ENCODE measurements at regions of chr12 and their contacts with region 1.

Region 1: DNA sequence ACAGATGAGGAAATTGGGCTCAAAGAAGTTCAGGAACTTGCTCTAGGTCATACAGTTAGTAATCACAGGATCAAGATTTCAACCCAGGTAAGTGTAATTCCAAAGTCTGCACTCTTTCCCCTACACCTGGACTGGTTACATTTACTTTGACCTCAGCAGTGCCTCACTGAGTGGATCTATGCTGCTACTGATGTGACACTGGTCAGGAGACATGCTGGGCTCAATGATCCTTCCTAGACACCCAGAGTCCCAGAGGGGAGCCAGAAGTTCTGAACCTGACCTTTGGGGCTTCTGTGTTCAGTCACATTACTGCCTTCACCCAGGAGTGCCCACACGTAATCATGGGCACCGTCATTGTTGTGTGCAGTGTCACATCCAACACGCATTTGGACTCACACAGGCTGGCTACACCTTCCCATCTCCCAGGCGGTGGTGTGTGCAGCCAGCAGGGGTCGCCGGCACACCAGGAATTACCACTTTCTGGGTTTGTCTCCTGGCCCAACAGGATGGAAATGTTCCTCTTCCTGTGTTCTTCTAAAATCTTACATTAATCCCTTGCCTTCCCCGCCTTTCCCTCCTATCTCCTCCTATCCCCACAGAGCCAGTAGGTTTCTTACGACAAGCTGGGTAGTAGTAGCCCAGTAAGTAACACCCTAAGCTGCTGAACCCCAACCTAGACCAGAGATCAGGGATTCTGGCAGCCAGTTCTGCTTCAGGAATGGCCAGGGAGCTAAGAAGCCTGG is 25.6 kb downstream of the CALCOCO1 start:
- DNase-seq: peak; percentile 82
- H3K4me3 Mint-ChIP-seq: no peak overlapping the region
- H3K27ac Mint-ChIP-seq: no peak overlapping the region
- H3K4me1 Mint-ChIP-seq: peaks cover 5% of the 10 kb centered on the region
- H3K27me3 Mint-ChIP-seq: peaks cover 80% of the 10 kb centered on the region
- CTCF ChIP-seq: peak; percentile 95

Region 2: GRCh38 chr12:53205747-53206419 is 495.8 kb before region 1 on chr12:
- CTCF ChIA-PET with region 1: no interaction called
- POLR2A ChIA-PET with region 1: no interaction called
- intact Hi-C with region 1: no loop called
- DNase-seq: peak; percentile 62
- H3K4me3 Mint-ChIP-seq: no peak overlapping the region
- H3K27ac Mint-ChIP-seq: no peak overlapping the region
- H3K4me1 Mint-ChIP-seq: peaks cover 9% of the 10 kb centered on the region
- H3K27me3 Mint-ChIP-seq: no peaks in the 10 kb centered on the region
- CTCF ChIP-seq: no peak

Region 3: DNA sequence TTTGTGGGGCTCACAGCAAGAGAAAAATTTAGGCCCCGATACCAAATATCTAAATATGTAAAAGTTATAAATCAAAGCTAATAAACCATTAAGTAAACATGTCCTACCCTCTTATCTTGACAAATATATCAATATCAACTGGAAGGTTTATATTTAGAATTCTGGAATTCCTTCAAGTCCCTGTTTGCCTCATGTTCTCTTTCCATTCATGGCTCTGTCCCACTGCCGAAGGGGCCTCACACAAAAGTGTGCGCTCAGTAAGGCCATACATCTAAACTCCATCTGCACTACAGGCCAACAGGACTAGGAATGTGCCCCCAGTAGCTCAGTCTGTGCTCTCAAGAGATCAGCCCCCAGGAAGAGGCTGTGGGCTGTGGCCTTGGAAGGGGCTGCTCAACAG is 15.3 kb before region 1 on chr12:
- CTCF ChIA-PET with region 1: interaction called, 19 read pairs
- POLR2A ChIA-PET with region 1: interaction called, 5 read pairs
- intact Hi-C with region 1: no loop called
- DNase-seq: no peak
- H3K4me3 Mint-ChIP-seq: no peak overlapping the region
- H3K27ac Mint-ChIP-seq: no peak overlapping the region
- H3K4me1 Mint-ChIP-seq: no peaks in the 10 kb centered on the region
- H3K27me3 Mint-ChIP-seq: no peaks in the 10 kb centered on the region
- CTCF ChIP-seq: no peak

Region 4: GRCh38 chr12:53719649-53720048 is 18.0 kb after region 1 on chr12:
- CTCF ChIA-PET with region 1: interaction called, 12 read pairs
- POLR2A ChIA-PET with region 1: interaction called, 29 read pairs
- intact Hi-C with region 1: no loop called
- DNase-seq: no peak
- H3K4me3 Mint-ChIP-seq: no peak overlapping the region
- H3K27ac Mint-ChIP-seq: no peak overlapping the region
- H3K4me1 Mint-ChIP-seq: no peaks in the 10 kb centered on the region
- H3K27me3 Mint-ChIP-seq: no peaks in the 10 kb centered on the region
- CTCF ChIP-seq: no peak

Region 5: DNA sequence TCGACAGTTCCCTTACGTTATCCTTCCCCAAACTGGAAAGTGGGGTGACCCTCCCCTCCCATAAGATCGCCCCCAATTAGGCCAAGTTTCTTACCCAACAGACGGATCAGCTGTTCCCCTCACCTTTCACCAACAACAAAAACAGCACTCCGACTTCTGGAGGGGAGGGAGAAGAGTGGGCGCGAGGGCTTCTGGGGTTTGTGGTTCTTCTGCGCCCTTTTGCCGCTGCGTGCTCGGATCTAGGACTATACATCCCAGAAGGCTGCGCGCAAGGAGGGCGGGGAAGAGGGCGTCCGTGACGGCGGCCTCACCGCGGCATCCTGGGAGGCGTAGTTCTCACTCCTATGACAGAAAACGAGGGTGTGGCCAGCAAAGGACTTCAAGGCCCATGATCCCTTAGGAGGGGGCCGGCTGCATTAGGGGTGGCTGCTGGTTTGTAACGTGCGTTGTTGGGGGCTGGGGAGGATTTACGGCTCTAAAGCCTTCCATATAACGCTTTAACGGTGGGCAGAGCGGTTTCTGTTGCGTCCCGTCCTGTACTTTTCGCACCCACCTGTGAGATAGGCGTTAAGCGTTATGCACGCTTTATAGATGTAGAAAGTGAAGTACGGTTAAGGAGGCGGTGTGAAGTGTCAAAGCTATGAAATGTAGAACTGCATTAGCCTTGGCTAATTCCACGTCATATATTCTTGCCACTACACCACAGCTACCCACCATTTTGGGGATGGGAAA is 25.8 kb after region 1 on chr12 and contains the start of gene CALCOCO1:
- CTCF ChIA-PET with region 1: interaction called, 74 read pairs
- POLR2A ChIA-PET with region 1: interaction called, 29 read pairs
- intact Hi-C with region 1: no loop called
- DNase-seq: peak; percentile 98
- H3K4me3 Mint-ChIP-seq: peak within 1 kb of the TSS; percentile 95
- H3K27ac Mint-ChIP-seq: peak within 1 kb of the TSS; percentile 99
- H3K4me1 Mint-ChIP-seq: peaks cover 15% of the 10 kb centered on the region
- H3K27me3 Mint-ChIP-seq: no peaks in the 10 kb centered on the region
- CTCF ChIP-seq: no peak
- total RNA-seq, gene CALCOCO1: 49.4 and 74.6 TPM in 2 replicates

Region 6: GRCh38 chr12:53738406-53739213 is 36.9 kb after region 1 on chr12:
- CTCF ChIA-PET with region 1: interaction called, 339 read pairs
- POLR2A ChIA-PET with region 1: interaction called, 6 read pairs
- intact Hi-C with region 1: loop called (anchors 1 kb)
- DNase-seq: no peak
- H3K4me3 Mint-ChIP-seq: no peak overlapping the region
- H3K27ac Mint-ChIP-seq: no peak overlapping the region
- H3K4me1 Mint-ChIP-seq: peaks cover 10% of the 10 kb centered on the region
- H3K27me3 Mint-ChIP-seq: peaks cover 14% of the 10 kb centered on the region
- CTCF ChIP-seq: no peak

Region 7: GRCh38 chr12:53757095-53757770 is 55.5 kb after region 1 on chr12:
- CTCF ChIA-PET with region 1: interaction called, 10 read pairs
- POLR2A ChIA-PET with region 1: no interaction called
- intact Hi-C with region 1: no loop called
- DNase-seq: peak; percentile 71
- H3K4me3 Mint-ChIP-seq: no peak overlapping the region
- H3K27ac Mint-ChIP-seq: no peak overlapping the region
- H3K4me1 Mint-ChIP-seq: peaks cover 7% of the 10 kb centered on the region
- H3K27me3 Mint-ChIP-seq: peaks cover 26% of the 10 kb centered on the region
- CTCF ChIP-seq: peak; percentile 83

Region 8: DNA sequence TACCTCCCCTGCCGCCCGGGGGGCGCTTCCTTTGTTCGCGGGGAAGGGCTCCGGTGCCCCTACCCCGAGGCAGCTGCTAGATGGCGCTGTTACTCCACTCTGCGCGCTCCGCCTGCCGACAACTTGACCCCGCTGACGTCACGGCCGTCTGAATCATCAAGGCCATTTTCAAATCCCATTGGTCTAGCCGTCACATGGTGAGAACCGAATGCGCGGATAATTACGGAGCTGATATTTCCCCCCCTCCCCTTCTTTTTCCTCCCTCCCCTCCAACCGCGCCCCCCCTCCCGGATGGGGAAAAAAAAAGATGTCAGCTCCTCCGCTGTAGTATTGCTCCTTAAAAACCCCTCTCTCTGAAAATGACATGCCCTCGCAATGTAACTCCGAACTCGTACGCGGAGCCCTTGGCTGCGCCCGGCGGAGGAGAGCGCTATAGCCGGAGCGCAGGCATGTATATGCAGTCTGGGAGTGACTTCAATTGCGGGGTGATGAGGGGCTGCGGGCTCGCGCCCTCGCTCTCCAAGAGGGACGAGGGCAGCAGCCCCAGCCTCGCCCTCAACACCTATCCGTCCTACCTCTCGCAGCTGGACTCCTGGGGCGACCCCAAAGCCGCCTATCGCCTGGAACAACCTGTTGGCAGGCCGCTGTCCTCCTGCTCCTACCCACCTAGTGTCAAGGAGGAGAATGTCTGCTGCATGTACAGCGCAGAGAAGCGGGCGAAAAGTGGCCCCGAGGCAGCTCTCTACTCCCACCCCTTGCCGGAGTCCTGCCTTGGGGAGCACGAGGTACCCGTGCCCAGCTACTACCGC is 283.4 kb after region 1 on chr12 and contains the start of gene HOXC10:
- CTCF ChIA-PET with region 1: interaction called, 8 read pairs
- POLR2A ChIA-PET with region 1: no interaction called
- intact Hi-C with region 1: loop called (anchors 5 kb)
- DNase-seq: peak; percentile 93
- H3K4me3 Mint-ChIP-seq: no peak within 1 kb of the TSS
- H3K27ac Mint-ChIP-seq: no peak within 1 kb of the TSS
- H3K4me1 Mint-ChIP-seq: peaks cover 20% of the 10 kb centered on the region
- H3K27me3 Mint-ChIP-seq: no peaks in the 10 kb centered on the region
- CTCF ChIP-seq: peak; percentile 64
- total RNA-seq, gene HOXC10: not detected in 2 replicates